T-cell (primary cell): ENCODE measurements at regions of chr3 and their contacts with region 1.

Region 1: DNA sequence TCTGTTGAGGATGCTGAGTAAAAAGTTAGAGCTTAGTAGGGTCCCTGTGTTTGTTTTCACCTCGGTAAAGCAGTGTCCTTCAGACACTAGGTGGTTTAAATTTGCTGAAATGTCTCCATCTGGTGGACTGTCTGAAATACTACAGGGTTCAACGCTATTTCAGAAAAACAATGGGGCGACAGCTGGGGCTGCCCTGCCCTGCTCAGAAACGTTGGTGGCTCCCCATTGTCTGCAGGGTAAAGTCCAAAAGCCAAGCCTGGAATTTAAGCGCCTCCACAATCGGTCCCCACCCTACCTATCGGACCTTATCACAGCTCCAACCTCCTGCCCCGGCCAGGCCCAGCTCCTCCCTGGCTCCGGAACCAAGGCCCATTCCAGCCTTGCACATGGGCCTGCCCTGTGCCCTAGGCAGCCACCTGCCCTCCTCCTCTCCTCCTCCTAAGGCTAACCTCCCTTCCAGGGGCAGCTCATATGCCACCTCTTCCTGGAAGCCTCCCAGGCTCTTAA is 4.3 kb upstream of the TSEN2 start:
- DNase-seq: peak in 7 of 35 experiments; percentile 3 to 71 (median 13)
- ATAC-seq: no peak
- H3K4me3 ChIP-seq: no peak overlapping the region
- H3K4me3 Mint-ChIP-seq: no peak overlapping the region
- H3K27ac ChIP-seq: no peak overlapping the region
- H3K27ac Mint-ChIP-seq: no peak overlapping the region
- H3K4me1 ChIP-seq: peaks cover 14 to 23% of the 10 kb centered on the region in 2 experiments
- H3K4me1 Mint-ChIP-seq: peaks cover 17 to 26% (median 22%) of the 10 kb centered on the region in 3 donors
- H3K27me3 ChIP-seq: peaks cover 0 to 4% of the 10 kb centered on the region in 2 experiments
- H3K27me3 Mint-ChIP-seq: no peaks in the 10 kb centered on the region

Region 2: DNA sequence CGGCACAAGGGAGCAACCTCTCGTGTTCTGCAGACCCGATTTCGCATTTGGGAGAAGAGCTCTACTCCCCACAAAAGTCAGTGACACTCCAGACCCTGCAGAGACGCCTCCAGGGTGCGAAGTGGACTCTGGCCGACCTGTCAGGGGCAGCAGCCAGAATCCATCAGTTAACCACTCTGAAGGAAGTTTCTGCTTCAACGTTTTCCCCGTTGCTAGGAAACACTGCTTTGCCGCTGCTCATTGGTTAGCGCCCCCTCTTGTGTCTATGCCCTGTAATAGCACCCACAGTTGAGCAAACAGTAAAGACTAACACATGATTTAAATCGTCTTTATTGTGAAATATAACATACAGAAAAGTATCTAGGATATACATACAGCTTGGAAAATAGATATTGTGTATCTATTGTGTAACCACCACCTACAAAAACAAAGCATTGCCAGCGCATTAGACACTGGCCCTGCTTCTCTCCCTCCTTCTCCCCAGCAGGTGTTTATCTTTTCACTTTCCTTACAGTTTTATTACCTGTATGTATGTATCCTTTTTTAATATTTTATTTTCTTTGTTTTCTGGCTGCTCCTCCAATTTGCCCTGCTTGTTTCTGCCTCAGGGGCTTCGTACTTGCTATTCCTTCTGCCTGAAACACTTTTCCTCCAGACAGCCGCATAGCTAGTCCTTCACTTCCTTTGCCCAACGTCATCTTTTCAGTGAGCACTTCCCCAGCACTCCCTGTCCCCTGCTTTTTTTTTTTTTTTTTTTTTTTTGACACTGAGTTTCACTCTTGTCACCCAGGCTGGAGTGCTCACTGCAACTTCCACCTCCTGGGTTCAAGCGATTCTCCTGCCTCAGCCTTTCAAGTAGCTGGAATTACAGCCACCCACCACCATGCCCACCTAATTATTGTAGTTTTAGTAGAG is 240.3 kb after region 1 on chr3:
- CTCF ChIA-PET with region 1: no interaction called
- POLR2A ChIA-PET with region 1: interaction called in 1 of 2 experiments, 16 read pairs
- DNase-seq: peak; percentile 26 to 88 (median 67)
- ATAC-seq: peak; percentile 89 to 97 (median 96)
- H3K4me3 ChIP-seq: no peak overlapping the region
- H3K4me3 Mint-ChIP-seq: peak overlapping the region; percentile 50 to 62 (median 60)
- H3K27ac ChIP-seq: no peak overlapping the region
- H3K27ac Mint-ChIP-seq: peak overlapping the region in 1 of 2 donors; percentile 39
- H3K4me1 ChIP-seq: peaks cover 0 to 10% of the 10 kb centered on the region in 2 experiments
- H3K4me1 Mint-ChIP-seq: peaks cover 8 to 19% (median 13%) of the 10 kb centered on the region in 3 donors
- H3K27me3 ChIP-seq: peaks cover 0 to 4% of the 10 kb centered on the region in 2 experiments
- H3K27me3 Mint-ChIP-seq: peaks cover 0 to 3% of the 10 kb centered on the region in 2 donors